ENCODE measurements at regions of chr9 and their contacts with region 1.

Region 1: DNA sequence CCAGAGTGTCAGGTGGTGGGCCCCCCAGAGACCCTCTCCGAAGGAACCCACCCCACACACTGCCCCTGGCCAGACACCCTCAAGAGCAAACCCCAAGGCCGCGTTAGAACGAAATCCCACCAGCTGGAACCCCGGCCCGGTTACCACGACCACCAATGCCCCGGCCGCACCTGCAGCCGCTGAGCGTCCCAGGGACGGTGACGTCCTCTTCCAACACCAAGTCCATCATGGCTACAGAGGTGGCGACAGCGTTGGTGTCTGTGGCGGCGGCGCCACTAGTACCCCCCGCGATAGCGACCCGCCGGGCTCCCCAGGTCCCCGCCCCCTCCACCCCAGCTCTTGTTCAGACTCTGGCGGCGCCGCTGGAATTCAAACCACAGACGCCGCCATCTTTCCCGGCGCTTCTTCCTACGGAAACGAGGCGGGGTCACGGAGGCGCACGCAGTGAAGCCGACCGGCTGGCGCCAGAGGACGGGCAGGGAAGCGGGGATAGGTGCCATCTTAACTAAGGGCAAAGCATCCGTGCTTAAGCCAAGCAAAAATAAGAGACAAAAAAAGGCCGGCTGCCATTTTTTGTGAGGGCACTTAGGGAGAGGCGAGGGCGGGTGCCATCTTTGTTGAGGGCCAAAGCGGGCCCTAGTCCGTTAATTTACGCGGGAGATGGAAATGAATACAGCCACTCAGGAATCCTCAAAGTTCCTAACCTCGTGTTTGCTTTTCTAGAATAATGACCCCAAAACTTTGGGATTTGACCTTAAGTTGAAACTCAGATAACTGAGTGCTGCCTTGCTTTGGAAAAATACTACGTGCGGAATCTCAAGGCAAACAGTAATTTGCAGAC is at the start of gene CDK5RAP2:
- DNase-seq: peak; percentile 93 to 95
- ATAC-seq: peak; percentile 84 to 92
- H3K4me3 ChIP-seq: peak within 1 kb of the TSS; percentile 89 to 98 (median 95)
- H3K27ac ChIP-seq: peak within 1 kb of the TSS; percentile 88 to 95 (median 89)
- H3K4me1 ChIP-seq: peaks cover 24% of the 10 kb centered on the region in 2 donors
- H3K27me3 ChIP-seq: no peaks in the 10 kb centered on the region
- CTCF ChIP-seq: no peak
- POLR2A ChIP-seq: peak; percentile 51 to 56
- total RNA-seq, gene CDK5RAP2: 57.4 to 86.3 (median 70.3) TPM

Region 2: DNA sequence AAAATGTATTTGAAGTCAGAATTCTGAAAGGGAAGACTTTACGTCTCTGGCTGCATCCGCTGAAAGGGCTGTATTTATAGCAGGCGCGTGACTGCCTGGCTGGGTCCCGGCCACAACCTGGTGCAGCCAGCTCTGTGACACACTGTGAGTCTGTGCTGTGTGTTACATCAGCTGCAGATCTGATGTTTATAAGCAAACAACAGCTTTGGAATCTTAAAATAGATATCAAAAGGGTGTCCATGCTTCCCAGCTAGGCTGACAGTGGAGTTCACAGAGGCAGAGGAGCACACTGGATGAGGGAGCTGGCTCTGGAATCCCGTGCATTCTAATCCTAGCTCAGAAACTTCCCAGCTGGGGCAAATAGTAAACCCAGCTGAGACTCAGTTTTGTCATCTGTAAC is 777.3 kb before region 1 on chr9:
- in situ Hi-C with region 1: no loop called
- intact Hi-C with region 1: loop called (anchors 10 kb)
- DNase-seq: peak; percentile 76 to 92
- ATAC-seq: peak; percentile 90 to 91
- H3K4me3 ChIP-seq: peak overlapping the region in 1 of 4 donors; percentile 11
- H3K27ac ChIP-seq: peak overlapping the region; percentile 76 to 90 (median 86)
- H3K4me1 ChIP-seq: peaks cover 23 to 28% of the 10 kb centered on the region in 2 donors
- H3K27me3 ChIP-seq: no peaks in the 10 kb centered on the region
- CTCF ChIP-seq: no peak
- POLR2A ChIP-seq: peak; percentile 22 to 62

Region 3: DNA sequence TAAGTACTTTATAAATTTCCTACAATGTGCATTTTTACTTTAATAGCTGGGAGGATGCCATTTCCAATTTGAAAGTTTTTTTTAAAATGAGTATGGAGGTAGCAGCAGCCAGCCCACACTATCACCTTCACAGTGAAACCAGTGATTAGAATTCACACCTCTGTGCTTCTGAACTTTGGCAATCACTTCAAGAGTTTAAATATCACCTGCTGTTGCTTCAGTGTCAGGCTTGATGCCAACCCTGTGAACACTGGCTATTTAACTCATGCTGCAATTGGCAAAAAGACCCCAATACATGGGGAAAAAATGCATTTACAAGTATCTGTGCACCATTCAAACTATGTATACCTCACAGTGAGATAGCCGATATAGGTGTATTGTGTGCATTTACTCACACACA is 57.4 kb before region 1 on chr9:
- in situ Hi-C with region 1: no loop called
- intact Hi-C with region 1: no loop called
- DNase-seq: no peak
- ATAC-seq: peak; percentile 39 to 41
- H3K4me3 ChIP-seq: no peak overlapping the region
- H3K27ac ChIP-seq: no peak overlapping the region
- H3K4me1 ChIP-seq: peaks cover 0 to 10% of the 10 kb centered on the region in 2 donors
- H3K27me3 ChIP-seq: no peaks in the 10 kb centered on the region
- CTCF ChIP-seq: no peak
- POLR2A ChIP-seq: no peak

Region 4: DNA sequence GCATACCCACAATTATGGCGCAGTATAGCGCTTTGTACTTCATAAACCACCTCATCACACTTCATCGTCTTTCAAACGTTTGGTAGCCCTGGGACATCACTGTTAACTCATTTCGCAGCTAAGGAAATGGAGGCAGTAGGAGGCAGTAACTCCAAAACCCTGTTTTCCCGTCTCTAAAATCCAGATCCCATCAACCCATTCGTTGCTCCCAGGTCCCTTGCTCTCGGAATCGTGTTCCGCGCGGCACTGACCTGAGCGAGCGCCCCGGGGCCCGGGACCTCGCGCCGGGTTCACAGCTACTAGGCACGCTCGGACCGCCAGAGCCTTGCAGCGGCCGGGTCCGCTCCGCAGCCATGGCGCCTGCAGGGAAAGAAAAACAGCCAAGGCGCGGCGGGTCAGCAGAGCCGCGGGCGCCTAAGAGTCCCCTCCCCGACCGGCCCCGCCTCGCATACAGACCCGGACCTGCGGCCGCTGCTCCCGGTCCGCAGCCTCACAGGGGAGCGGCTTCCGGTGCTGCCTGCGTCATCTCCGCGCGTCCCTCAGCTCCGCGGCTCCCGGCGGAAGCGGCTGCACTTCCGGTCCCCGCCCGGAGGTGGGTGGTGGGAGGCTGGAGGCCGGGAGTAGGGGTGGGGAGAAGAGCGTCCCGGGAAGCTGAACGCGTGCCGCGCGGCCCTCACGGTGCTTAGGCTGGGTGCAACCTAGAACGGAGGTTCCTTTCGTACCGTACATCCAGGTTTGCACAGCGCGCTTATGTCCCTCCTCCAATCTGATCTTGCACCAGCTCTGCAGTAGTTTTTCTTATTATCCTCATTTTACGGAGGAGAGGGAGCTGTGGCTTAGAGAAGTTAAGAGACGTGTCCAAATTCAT is 213.2 kb after region 1 on chr9 and contains the start of gene FBXW2:
- in situ Hi-C with region 1: no loop called
- intact Hi-C with region 1: loop called (anchors 5 kb)
- DNase-seq: peak; percentile 85 to 88
- ATAC-seq: peak; percentile 97 to 99
- H3K4me3 ChIP-seq: peak within 1 kb of the TSS; percentile 85 to 98 (median 94)
- H3K27ac ChIP-seq: peak within 1 kb of the TSS; percentile 84 to 95 (median 92)
- H3K4me1 ChIP-seq: peaks cover 33% of the 10 kb centered on the region in 2 donors
- H3K27me3 ChIP-seq: no peaks in the 10 kb centered on the region
- CTCF ChIP-seq: peak in 2 of 5 experiments; percentile 18
- POLR2A ChIP-seq: peak; percentile 79 to 85
- total RNA-seq, gene FBXW2: 17.0 to 20.0 (median 19.0) TPM

Region 5: GRCh38 chr9:120842690-120843499 is 262.9 kb after region 1 on chr9 and contains the start of gene PSMD5:
- in situ Hi-C with region 1: no loop called
- intact Hi-C with region 1: loop called (anchors 10 kb)
- DNase-seq: peak; percentile 97 to 99
- ATAC-seq: peak; percentile 98 to 99
- H3K4me3 ChIP-seq: peak within 1 kb of the TSS; percentile 79 to 91 (median 81)
- H3K27ac ChIP-seq: peak within 1 kb of the TSS; percentile 90 to 96 (median 91)
- H3K4me1 ChIP-seq: peaks cover 16 to 21% of the 10 kb centered on the region in 2 donors
- H3K27me3 ChIP-seq: no peaks in the 10 kb centered on the region
- CTCF ChIP-seq: no peak
- POLR2A ChIP-seq: peak; percentile 69 to 80
- total RNA-seq, gene PSMD5: 9.3 to 35.3 (median 12.6) TPM

Measured in gastrocnemius medialis (tissue), 4 donors.